ENCODE measurements at regions of chr22 and their contacts with region 1.

Region 1: DNA sequence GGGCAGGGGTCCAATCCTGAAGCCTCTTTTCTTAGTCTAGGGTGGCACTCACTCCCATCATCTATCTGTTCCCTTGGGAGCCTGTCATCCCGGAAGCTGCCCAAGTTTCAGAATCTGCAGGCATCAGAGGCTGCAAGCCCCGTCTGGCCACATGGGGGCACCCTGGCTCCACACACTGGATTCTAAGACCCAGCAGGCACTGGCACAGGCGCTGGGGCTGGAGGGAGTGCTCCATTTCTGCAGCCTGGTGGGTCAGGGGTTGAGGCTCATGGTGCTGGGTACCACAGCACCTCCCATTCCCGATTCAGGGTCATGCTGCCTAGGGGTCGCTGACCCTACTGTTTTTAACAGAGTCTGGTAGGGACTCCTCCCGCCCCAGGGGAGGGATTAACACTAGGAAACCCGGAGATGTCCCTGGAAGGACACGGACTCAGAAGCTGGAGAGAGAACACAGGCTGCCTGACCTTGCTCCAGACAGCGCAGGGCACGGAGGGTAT is 243.9 kb upstream of the SYN3 start:
- DNase-seq: peak; percentile 77
- ATAC-seq: peak; percentile 59
- H3K4me3 Mint-ChIP-seq: peak overlapping the region; percentile 33
- H3K27ac Mint-ChIP-seq: peak overlapping the region; percentile 61
- H3K4me1 Mint-ChIP-seq: peaks cover 69% of the 10 kb centered on the region
- H3K27me3 Mint-ChIP-seq: no peaks in the 10 kb centered on the region
- CTCF ChIP-seq: peak; percentile 84

Region 2: DNA sequence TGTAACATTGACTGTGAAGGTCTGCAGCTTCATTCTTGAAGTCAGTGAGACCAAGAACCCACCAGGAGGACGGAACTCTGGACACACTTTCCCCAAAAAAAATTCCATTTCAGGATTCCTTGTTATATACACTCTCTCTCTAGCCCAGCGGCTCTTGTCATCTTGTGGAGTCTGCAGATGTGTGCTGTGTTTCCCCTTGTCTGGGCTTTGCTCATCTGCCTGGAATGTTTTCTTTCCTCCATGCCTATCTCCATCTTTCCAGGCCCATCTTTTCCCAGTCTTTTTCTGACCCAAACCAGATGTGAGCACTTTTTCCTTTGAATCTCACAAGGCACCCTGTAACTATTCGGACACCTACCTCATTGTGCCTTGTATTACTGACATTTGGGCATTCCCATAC is 1907.8 kb before region 1 on chr22:
- CTCF ChIA-PET with region 1: no interaction called
- POLR2A ChIA-PET with region 1: interaction called, 12 read pairs
- intact Hi-C with region 1: no loop called
- DNase-seq: no peak
- ATAC-seq: no peak
- H3K4me3 Mint-ChIP-seq: no peak overlapping the region
- H3K27ac Mint-ChIP-seq: no peak overlapping the region
- H3K4me1 Mint-ChIP-seq: peaks cover 3% of the 10 kb centered on the region
- H3K27me3 Mint-ChIP-seq: no peaks in the 10 kb centered on the region
- CTCF ChIP-seq: no peak

Region 3: GRCh38 chr22:33126881-33127280 is 175.2 kb before region 1 on chr22:
- CTCF ChIA-PET with region 1: no interaction called
- POLR2A ChIA-PET with region 1: no interaction called
- intact Hi-C with region 1: no loop called
- DNase-seq: no peak
- ATAC-seq: no peak
- H3K4me3 Mint-ChIP-seq: no peak overlapping the region
- H3K27ac Mint-ChIP-seq: no peak overlapping the region
- H3K4me1 Mint-ChIP-seq: peaks cover 2% of the 10 kb centered on the region
- H3K27me3 Mint-ChIP-seq: peaks cover 5% of the 10 kb centered on the region
- CTCF ChIP-seq: no peak

Region 4: GRCh38 chr22:33271390-33272161 is 30.5 kb before region 1 on chr22:
- CTCF ChIA-PET with region 1: interaction called, 59 read pairs
- POLR2A ChIA-PET with region 1: interaction called, 36 read pairs
- intact Hi-C with region 1: loop called (anchors 1 kb)
- DNase-seq: peak; percentile 45
- ATAC-seq: peak; percentile 90
- H3K4me3 Mint-ChIP-seq: peak overlapping the region; percentile 64
- H3K27ac Mint-ChIP-seq: peak overlapping the region; percentile 81
- H3K4me1 Mint-ChIP-seq: peaks cover 83% of the 10 kb centered on the region
- H3K27me3 Mint-ChIP-seq: no peaks in the 10 kb centered on the region
- CTCF ChIP-seq: no peak

Region 5: GRCh38 chr22:33362702-33363101 is 60.6 kb after region 1 on chr22:
- CTCF ChIA-PET with region 1: no interaction called
- POLR2A ChIA-PET with region 1: no interaction called
- intact Hi-C with region 1: loop called (anchors 2 kb)
- DNase-seq: no peak
- ATAC-seq: no peak
- H3K4me3 Mint-ChIP-seq: no peak overlapping the region
- H3K27ac Mint-ChIP-seq: peak overlapping the region; percentile 56
- H3K4me1 Mint-ChIP-seq: peaks cover 24% of the 10 kb centered on the region
- H3K27me3 Mint-ChIP-seq: no peaks in the 10 kb centered on the region
- CTCF ChIP-seq: no peak

Region 6: GRCh38 chr22:33426451-33426850 is 124.4 kb after region 1 on chr22:
- CTCF ChIA-PET with region 1: no interaction called
- POLR2A ChIA-PET with region 1: no interaction called
- intact Hi-C with region 1: no loop called
- DNase-seq: no peak
- ATAC-seq: no peak
- H3K4me3 Mint-ChIP-seq: no peak overlapping the region
- H3K27ac Mint-ChIP-seq: no peak overlapping the region
- H3K4me1 Mint-ChIP-seq: peaks cover 5% of the 10 kb centered on the region
- H3K27me3 Mint-ChIP-seq: no peaks in the 10 kb centered on the region
- CTCF ChIP-seq: no peak

Region 7: GRCh38 chr22:33440756-33441155 is 138.7 kb after region 1 on chr22:
- CTCF ChIA-PET with region 1: no interaction called
- POLR2A ChIA-PET with region 1: no interaction called
- intact Hi-C with region 1: no loop called
- DNase-seq: no peak
- ATAC-seq: no peak
- H3K4me3 Mint-ChIP-seq: no peak overlapping the region
- H3K27ac Mint-ChIP-seq: no peak overlapping the region
- H3K4me1 Mint-ChIP-seq: peaks cover 2% of the 10 kb centered on the region
- H3K27me3 Mint-ChIP-seq: no peaks in the 10 kb centered on the region
- CTCF ChIP-seq: no peak

Region 8: GRCh38 chr22:33565580-33565995 is 263.5 kb after region 1 on chr22:
- CTCF ChIA-PET with region 1: interaction called, 5 read pairs
- POLR2A ChIA-PET with region 1: interaction called, 5 read pairs
- intact Hi-C with region 1: loop called (anchors 1 kb)
- DNase-seq: no peak
- ATAC-seq: no peak
- H3K4me3 Mint-ChIP-seq: no peak overlapping the region
- H3K27ac Mint-ChIP-seq: peak overlapping the region; percentile 8
- H3K4me1 Mint-ChIP-seq: peaks cover 81% of the 10 kb centered on the region
- H3K27me3 Mint-ChIP-seq: no peaks in the 10 kb centered on the region
- CTCF ChIP-seq: no peak

Region 9: DNA sequence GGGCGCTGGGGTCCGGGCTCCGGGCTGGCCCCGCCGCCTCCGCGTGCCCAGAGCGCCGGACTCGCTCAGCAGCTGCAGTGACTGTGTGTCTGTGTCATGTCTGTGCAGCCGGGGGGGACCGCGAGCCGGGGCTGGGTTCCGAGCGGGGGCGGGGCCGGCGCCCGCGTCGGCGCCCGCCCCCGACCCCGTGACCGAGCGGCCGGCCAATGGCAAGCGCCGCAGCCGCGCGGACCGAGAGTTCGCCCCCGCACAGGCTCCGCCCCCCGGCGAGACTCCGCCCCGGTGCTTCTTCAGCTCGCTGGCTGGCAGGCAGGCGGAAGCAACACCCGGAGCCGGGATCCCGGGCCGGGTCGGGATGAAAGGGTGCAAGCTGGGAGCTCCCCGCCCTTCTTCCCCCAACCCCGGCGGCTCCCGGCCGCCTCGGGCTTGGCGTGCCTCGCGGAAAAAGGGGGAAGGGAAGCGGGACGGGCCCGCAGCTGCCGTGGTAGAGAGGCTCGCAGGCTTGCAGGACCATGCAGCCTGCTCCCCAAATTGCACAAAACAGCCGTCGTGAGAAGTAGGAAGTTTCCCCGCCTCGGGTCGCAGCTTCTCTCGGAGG is 618.9 kb after region 1 on chr22:
- CTCF ChIA-PET with region 1: interaction called, 61 read pairs
- POLR2A ChIA-PET with region 1: interaction called, 7 read pairs
- intact Hi-C with region 1: loop called (anchors 1 kb)
- DNase-seq: peak; percentile 98
- ATAC-seq: peak; percentile 86
- H3K4me3 Mint-ChIP-seq: peak overlapping the region; percentile 91
- H3K27ac Mint-ChIP-seq: peak overlapping the region; percentile 50
- H3K4me1 Mint-ChIP-seq: peaks cover 47% of the 10 kb centered on the region
- H3K27me3 Mint-ChIP-seq: peaks cover 10% of the 10 kb centered on the region
- CTCF ChIP-seq: no peak

Region 10: DNA sequence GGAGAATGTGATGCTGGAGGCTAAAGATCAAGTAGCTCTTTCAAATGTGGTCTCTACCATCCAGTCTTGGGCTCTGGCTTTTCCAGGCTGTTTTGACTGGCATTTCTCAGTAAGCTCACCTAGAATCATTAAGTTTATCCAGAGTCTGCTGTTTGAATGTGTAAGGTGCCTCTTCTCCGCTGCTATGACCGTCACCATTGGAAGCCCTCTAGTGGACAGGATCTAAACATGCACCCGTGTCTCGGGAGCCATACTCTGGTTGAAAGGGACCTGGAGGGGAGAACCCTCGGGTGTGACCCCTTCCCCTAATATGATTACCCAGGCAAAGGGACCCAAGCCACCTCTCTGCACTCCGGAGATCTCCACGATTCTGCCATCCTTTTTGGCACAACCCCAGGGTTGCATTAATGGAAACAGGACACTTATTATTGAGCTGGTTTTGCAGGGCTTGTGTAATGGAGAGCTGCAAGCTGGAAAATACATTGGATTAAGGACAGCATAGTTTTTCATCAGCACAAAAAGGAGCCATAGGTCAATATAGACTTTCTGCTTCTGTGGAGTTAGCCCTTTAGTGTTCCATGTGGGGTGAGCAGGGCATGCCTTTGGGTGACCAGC is 809.2 kb after region 1 on chr22:
- CTCF ChIA-PET with region 1: interaction called, 50 read pairs
- POLR2A ChIA-PET with region 1: interaction called, 3 read pairs
- intact Hi-C with region 1: loop called (anchors 1 kb)
- DNase-seq: peak; percentile 17
- ATAC-seq: peak; percentile 57
- H3K4me3 Mint-ChIP-seq: no peak overlapping the region
- H3K27ac Mint-ChIP-seq: no peak overlapping the region
- H3K4me1 Mint-ChIP-seq: no peaks in the 10 kb centered on the region
- H3K27me3 Mint-ChIP-seq: peaks cover 4% of the 10 kb centered on the region
- CTCF ChIP-seq: no peak

Measured in activated B cell treated with CpG ODN at 0.5 μM for 24 hours (primary cell).